Common myeloid progenitor, CD34-positive (primary cell): ENCODE measurements at regions of chr1 and their contacts with region 1.

Region 1: GRCh38 chr1:243286409-243287122 is 30.7 kb downstream of the SDCCAG8 start:
- DNase-seq: peak in 1 of 3 donors; percentile 44
- H3K4me3 ChIP-seq: no peak overlapping the region
- H3K27ac ChIP-seq: peak overlapping the region; percentile 10 to 60
- H3K4me1 ChIP-seq: peaks cover 18 to 49% (median 38%) of the 10 kb centered on the region in 4 experiments
- H3K27me3 ChIP-seq: no peaks in the 10 kb centered on the region

Region 2: DNA sequence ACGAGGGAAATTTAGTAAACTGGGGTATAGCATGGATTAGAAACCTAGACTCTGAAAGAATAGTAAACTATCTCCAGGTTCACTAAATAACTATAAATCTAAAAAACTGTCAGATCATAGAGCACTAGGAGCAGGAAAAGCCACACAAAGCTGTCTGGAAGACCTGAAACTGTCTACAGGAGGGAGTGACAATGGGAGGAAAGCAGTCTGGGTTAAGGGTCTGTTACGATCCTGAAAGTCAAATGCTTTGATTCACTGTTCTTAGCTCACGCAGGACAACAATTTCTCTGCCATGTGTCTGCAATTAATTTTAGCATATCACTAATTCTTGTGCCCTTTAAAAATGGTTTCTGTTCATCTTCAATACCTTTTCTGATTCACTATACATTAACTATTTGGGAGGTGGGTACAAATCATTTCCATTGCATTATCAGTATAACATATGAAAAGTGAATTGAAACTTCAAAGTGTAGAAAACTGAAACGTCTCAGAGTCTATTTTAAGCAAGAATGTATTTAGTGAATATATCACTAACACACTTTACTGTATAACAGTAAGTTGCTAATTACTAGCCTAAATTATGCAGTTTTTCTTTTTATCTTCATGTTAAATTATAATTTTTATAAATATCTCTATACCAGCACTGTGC is 49.8 kb before region 1 on chr1:
- CTCF ChIA-PET with region 1: no interaction called
- POLR2A ChIA-PET with region 1: no interaction called
- DNase-seq: no peak
- H3K4me3 ChIP-seq: no peak overlapping the region
- H3K27ac ChIP-seq: no peak overlapping the region
- H3K4me1 ChIP-seq: no peaks in the 10 kb centered on the region
- H3K27me3 ChIP-seq: no peaks in the 10 kb centered on the region

Region 3: GRCh38 chr1:243255791-243256512 is 30.6 kb before region 1 on chr1 and contains the start of gene SDCCAG8:
- CTCF ChIA-PET with region 1: interaction called, 16 read pairs
- POLR2A ChIA-PET with region 1: interaction called, 9 read pairs
- DNase-seq: peak; percentile 99 to 100 (median 100)
- H3K4me3 ChIP-seq: peak within 1 kb of the TSS; percentile 84 to 98 (median 93)
- H3K27ac ChIP-seq: peak within 1 kb of the TSS; percentile 92 to 95
- H3K4me1 ChIP-seq: peaks cover 22 to 66% (median 26%) of the 10 kb centered on the region in 4 experiments
- H3K27me3 ChIP-seq: no peaks in the 10 kb centered on the region

Region 4: DNA sequence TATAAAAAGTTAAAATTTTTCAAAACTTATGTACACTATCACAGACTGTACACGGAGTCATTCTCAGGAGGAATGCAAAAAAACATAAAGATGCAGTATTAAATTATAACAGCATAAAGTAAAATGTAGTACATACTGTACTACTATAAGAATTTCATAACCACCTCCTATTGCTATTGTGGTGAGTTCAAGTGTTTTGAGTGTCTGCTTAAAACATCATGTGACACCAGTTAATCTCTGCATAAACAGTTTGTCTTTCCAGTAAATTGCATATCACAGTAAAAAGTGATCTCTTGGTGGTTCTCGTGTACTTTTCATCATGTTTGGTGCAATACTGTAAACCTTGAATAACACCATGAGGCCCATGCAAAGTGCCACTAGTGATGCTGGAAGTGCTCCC is 14.5 kb after region 1 on chr1:
- CTCF ChIA-PET with region 1: no interaction called
- POLR2A ChIA-PET with region 1: no interaction called
- DNase-seq: no peak
- H3K4me3 ChIP-seq: no peak overlapping the region
- H3K27ac ChIP-seq: no peak overlapping the region
- H3K4me1 ChIP-seq: no peaks in the 10 kb centered on the region
- H3K27me3 ChIP-seq: no peaks in the 10 kb centered on the region